AG04449 (cell line): ENCODE measurements at regions of chr11 and their contacts with region 1.

Region 1: GRCh38 chr11:102780491-102780918 is at the start of gene MMP10:
- DNase-seq: no peak
- H3K4me3 ChIP-seq: no peak within 1 kb of the TSS
- CTCF ChIP-seq: peak; percentile 37

Region 2: DNA sequence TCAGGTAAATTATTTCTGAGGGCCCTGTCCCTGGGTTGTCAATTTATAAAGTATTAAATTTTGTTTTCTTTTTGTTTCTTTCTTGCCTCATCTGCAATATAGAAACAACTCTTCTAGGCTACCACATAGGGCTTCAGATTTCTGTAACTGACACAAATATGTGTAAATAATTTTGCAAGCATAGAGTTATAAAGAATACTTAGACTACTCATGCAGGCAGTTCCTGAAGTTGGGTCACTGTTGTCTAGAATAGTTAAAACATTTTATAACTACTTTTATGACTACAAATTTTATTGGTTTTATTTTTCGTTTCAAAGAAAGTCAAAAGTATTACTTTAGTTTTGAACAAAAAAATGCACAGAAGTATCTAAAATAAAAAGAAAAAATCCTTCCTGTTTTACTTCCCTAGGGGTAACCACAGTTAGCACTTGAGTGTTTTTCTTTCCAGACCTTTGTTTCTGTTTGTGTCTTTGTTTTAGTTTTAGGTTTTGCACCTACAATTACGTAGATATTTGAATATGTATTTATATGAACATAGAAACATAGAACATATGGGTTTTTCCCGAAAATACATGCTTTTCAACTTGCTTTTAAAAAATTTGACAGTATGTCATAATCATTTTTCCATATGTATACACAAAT is 315.5 kb before region 1 on chr11:
- CTCF ChIA-PET with region 1: no interaction called
- POLR2A ChIA-PET with region 1: no interaction called
- DNase-seq: no peak
- H3K4me3 ChIP-seq: no peak overlapping the region
- CTCF ChIP-seq: no peak

Region 3: GRCh38 chr11:102716527-102716926 is 64.0 kb before region 1 on chr11:
- CTCF ChIA-PET with region 1: no interaction called
- POLR2A ChIA-PET with region 1: no interaction called
- DNase-seq: no peak
- H3K4me3 ChIP-seq: no peak overlapping the region
- CTCF ChIP-seq: no peak

Region 4: GRCh38 chr11:102794447-102794781 is 13.9 kb after region 1 on chr11:
- CTCF ChIA-PET with region 1: interaction called, 27 read pairs
- POLR2A ChIA-PET with region 1: no interaction called
- DNase-seq: no peak
- H3K4me3 ChIP-seq: no peak overlapping the region
- CTCF ChIP-seq: peak; percentile 41